BJ (cell line): ENCODE measurements at regions of chr13 and their contacts with region 1.

Region 1: GRCh38 chr13:43159026-43159461 is 135.7 kb downstream of the DNAJC15 start:
- DNase-seq: no peak
- H3K4me3 ChIP-seq: no peak overlapping the region
- H3K27me3 ChIP-seq: no peaks in the 10 kb centered on the region
- CTCF ChIP-seq: 0 out of 2 replicates have a peak, but pooled peaks have one; percentile 20

Region 2: DNA sequence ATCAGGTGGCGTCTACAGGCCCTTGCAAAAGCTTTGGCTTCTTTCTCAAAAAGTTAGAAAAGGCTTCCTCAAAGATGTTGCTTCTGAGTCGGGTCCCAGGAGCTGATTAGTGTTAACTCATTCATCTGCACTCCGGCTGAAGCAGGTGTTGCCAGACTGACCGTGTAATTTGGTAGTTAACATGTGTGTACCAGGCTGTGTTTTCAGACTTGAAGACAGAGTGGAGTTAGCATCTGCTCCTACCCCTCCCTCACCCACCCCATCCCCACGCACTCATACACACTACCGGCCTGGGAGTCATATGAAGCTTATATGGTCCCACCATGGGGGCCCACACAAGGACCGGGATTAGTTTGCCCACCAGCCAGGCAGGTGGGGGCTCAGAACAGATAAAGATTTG is 24.2 kb before region 1 on chr13:
- CTCF ChIA-PET with region 1: no interaction called
- POLR2A ChIA-PET with region 1: no interaction called
- DNase-seq: no peak
- H3K4me3 ChIP-seq: no peak overlapping the region
- H3K27me3 ChIP-seq: no peaks in the 10 kb centered on the region; the same call in none of the 2 replicates
- CTCF ChIP-seq: no peak

Region 3: GRCh38 chr13:43776501-43777079 is 617.5 kb after region 1 on chr13:
- CTCF ChIA-PET with region 1: no interaction called
- POLR2A ChIA-PET with region 1: interaction called, 10 read pairs
- DNase-seq: no peak
- H3K4me3 ChIP-seq: no peak overlapping the region
- H3K27me3 ChIP-seq: no peaks in the 10 kb centered on the region
- CTCF ChIP-seq: no peak